ENCODE measurements at regions of chr16 and their contacts with region 1.

Region 1: GRCh38 chr16:30997000-30997886 is 12.2 kb downstream of the HSD3B7 start:
- DNase-seq: peak; percentile 82
- ATAC-seq: peak; percentile 90
- H3K4me3 ChIP-seq: peak overlapping the region; percentile 54 to 79
- H3K27ac ChIP-seq: peak overlapping the region; percentile 95
- H3K4me1 ChIP-seq: peaks cover 33% of the 10 kb centered on the region
- H3K27me3 ChIP-seq: no peaks in the 10 kb centered on the region
- CTCF ChIP-seq: no peak

Region 2: GRCh38 chr16:30910427-30911029 is 86.7 kb before region 1 on chr16:
- CTCF ChIA-PET with region 1: no interaction called
- POLR2A ChIA-PET with region 1: no interaction called
- in situ Hi-C with region 1: no loop called
- intact Hi-C with region 1: no loop called
- DNase-seq: no peak
- ATAC-seq: no peak
- H3K4me3 ChIP-seq: no peak overlapping the region
- H3K27ac ChIP-seq: no peak overlapping the region
- H3K4me1 ChIP-seq: 0 out of 2 replicates have a peak, but pooled peaks cover 3% of the 10 kb centered on the region
- H3K27me3 ChIP-seq: no peaks in the 10 kb centered on the region
- CTCF ChIP-seq: no peak

Region 3: GRCh38 chr16:31022544-31023251 is 25.5 kb after region 1 on chr16:
- CTCF ChIA-PET with region 1: no interaction called
- POLR2A ChIA-PET with region 1: no interaction called
- in situ Hi-C with region 1: no loop called
- intact Hi-C with region 1: loop called (anchors 1 kb)
- DNase-seq: no peak
- ATAC-seq: no peak
- H3K4me3 ChIP-seq: no peak overlapping the region
- H3K27ac ChIP-seq: no peak overlapping the region
- H3K4me1 ChIP-seq: no peaks in the 10 kb centered on the region
- H3K27me3 ChIP-seq: no peaks in the 10 kb centered on the region
- CTCF ChIP-seq: no peak

Measured in Panc1 (cell line).